Heart right ventricle (tissue), 16 donors: ENCODE measurements at regions of chr6 and their contacts with region 1.

Region 1: GRCh38 chr6:134938896-134939295 is 11.0 kb downstream of the ALDH8A1 start:
- DNase-seq: no peak
- ATAC-seq: no peak
- H3K4me3 ChIP-seq: no peak overlapping the region
- H3K27ac ChIP-seq: no peak overlapping the region
- H3K4me1 ChIP-seq: no peaks in the 10 kb centered on the region
- H3K27me3 ChIP-seq: no peaks in the 10 kb centered on the region
- CTCF ChIP-seq: no peak

Region 2: GRCh38 chr6:134123666-134124208 is 815.2 kb before region 1 on chr6:
- intact Hi-C with region 1: loop called in 6 of 10 experiments (anchors 2 to 10 kb)
- DNase-seq: no peak
- ATAC-seq: peak in 1 of 8 donors; percentile 35
- H3K4me3 ChIP-seq: no peak overlapping the region
- H3K27ac ChIP-seq: no peak overlapping the region
- H3K4me1 ChIP-seq: peaks cover 0 to 6% (median 0%) of the 10 kb centered on the region in 9 donors
- H3K27me3 ChIP-seq: no peaks in the 10 kb centered on the region
- CTCF ChIP-seq: peak; percentile 38 to 82 (median 73)

Region 3: DNA sequence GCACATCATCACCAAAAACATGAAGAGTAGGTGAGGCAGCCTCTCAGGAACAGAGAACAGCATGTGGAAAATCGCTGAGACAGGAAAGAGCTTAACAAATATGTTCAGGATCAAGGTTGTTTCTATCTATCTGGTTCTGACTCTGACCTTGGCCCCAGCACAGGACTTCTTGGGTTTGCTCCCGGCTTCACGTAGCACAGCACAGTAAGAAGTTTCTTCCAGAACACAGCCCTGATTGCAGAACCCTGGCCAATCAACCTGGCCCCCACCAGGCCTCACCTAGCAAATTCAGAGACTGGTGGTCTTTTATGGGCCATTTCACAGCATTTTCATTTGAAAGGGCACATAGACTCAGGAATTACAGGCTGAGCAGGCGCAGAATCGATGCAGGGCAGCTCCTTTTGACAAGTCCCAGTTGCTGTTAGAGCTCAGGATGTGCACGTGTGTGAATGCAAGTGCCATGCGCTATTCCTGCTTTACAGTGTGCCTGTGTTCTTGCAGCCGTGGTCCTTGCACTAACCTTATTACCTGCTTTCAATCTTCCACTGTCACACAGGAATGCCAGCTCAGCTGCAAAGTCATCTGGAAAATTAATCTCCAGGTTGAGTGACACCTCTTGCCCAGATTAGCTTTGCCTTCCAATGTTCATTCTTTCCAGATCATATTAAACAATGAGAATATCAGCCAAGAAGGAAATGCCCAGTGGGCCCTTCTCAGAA is 786.0 kb before region 1 on chr6:
- intact Hi-C with region 1: loop called in 8 of 10 experiments (anchors 2 to 10 kb)
- DNase-seq: no peak
- ATAC-seq: peak in 1 of 8 donors; percentile 35
- H3K4me3 ChIP-seq: no peak overlapping the region
- H3K27ac ChIP-seq: no peak overlapping the region
- H3K4me1 ChIP-seq: peaks cover 0 to 5% (median 0%) of the 10 kb centered on the region in 9 donors
- H3K27me3 ChIP-seq: no peaks in the 10 kb centered on the region
- CTCF ChIP-seq: no peak

Region 4: DNA sequence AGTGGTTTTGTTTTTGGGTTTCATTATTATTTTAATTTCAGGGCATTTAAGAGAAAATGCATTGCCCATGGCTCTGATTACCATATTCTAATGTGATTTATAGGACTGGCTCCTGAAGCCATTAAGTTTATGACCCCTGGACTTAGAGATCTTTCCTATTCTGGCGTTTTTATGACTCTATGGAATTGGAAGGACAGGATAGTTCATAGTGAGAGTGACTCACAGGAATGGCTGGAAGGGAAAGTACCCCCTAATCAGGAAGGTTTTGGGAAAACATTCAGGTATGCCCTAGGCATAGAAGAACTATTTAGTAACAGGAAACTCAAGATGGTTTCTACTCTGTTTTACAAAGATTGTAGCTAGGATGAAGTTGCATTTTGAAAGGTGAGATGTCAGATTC is 777.9 kb before region 1 on chr6:
- intact Hi-C with region 1: loop called in 8 of 10 experiments (anchors 2 to 10 kb)
- DNase-seq: no peak
- ATAC-seq: no peak
- H3K4me3 ChIP-seq: no peak overlapping the region
- H3K27ac ChIP-seq: no peak overlapping the region
- H3K4me1 ChIP-seq: no peaks in the 10 kb centered on the region
- H3K27me3 ChIP-seq: no peaks in the 10 kb centered on the region
- CTCF ChIP-seq: no peak

Region 5: GRCh38 chr6:134822920-134823709 is 115.8 kb before region 1 on chr6:
- intact Hi-C with region 1: loop called in 1 of 10 experiments (anchors 10 kb)
- DNase-seq: peak in 1 of 2 donors; percentile 74
- ATAC-seq: peak; percentile 88 to 96 (median 90)
- H3K4me3 ChIP-seq: no peak overlapping the region
- H3K27ac ChIP-seq: no peak overlapping the region
- H3K4me1 ChIP-seq: peaks cover 0 to 25% (median 12%) of the 10 kb centered on the region in 9 donors
- H3K27me3 ChIP-seq: no peaks in the 10 kb centered on the region
- CTCF ChIP-seq: peak; percentile 78 to 93 (median 88)

Region 6: DNA sequence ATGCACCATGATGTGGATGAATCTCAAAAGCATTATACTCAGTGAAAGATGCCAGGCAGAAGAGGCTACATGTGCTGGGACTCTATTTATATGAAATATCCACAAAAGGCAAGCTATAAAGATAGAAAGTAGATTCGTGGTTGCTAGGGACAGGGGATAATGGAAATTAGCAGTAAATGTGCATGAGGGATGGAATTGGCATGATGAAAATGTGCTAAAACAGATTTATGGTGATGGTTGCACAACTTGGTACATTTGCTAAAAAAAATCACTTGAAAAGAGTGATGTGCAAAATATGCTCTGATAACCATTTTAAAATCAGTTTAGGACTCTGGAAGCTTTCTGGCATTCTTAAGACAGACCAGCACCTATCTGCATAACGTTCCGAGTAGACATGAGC is 50.6 kb before region 1 on chr6:
- intact Hi-C with region 1: loop called in 1 of 10 experiments (anchors 5 kb)
- DNase-seq: no peak
- ATAC-seq: no peak
- H3K4me3 ChIP-seq: no peak overlapping the region
- H3K27ac ChIP-seq: no peak overlapping the region
- H3K4me1 ChIP-seq: no peaks in the 10 kb centered on the region
- H3K27me3 ChIP-seq: peaks cover 0 to 3% (median 0%) of the 10 kb centered on the region in 7 donors
- CTCF ChIP-seq: no peak

Region 7: GRCh38 chr6:134995536-134995935 is 56.6 kb after region 1 on chr6:
- intact Hi-C with region 1: no loop called
- DNase-seq: no peak
- ATAC-seq: no peak
- H3K4me3 ChIP-seq: no peak overlapping the region
- H3K27ac ChIP-seq: no peak overlapping the region
- H3K4me1 ChIP-seq: no peaks in the 10 kb centered on the region
- H3K27me3 ChIP-seq: no peaks in the 10 kb centered on the region
- CTCF ChIP-seq: no peak